ENCODE measurements at regions of chr9 and their contacts with region 1.

Region 1: GRCh38 chr9:92044936-92045335 is 70.3 kb downstream of the SPTLC1 start:
- H3K4me3 ChIP-seq: no peak overlapping the region
- H3K27ac ChIP-seq: no peak overlapping the region
- H3K4me1 ChIP-seq: no peaks in the 10 kb centered on the region
- CTCF ChIP-seq: no peak

Region 2: GRCh38 chr9:91790917-91791316 is 254.0 kb before region 1 on chr9:
- CTCF ChIA-PET with region 1: interaction called, 12 read pairs
- POLR2A ChIA-PET with region 1: no interaction called
- H3K4me3 ChIP-seq: no peak overlapping the region
- H3K27ac ChIP-seq: no peak overlapping the region
- H3K4me1 ChIP-seq: peaks cover 5% of the 10 kb centered on the region
- CTCF ChIP-seq: no peak

Measured in HEK293 (cell line).